CD8-positive, alpha-beta T cell (primary cell): ENCODE measurements at regions of chr1 and their contacts with region 1.

Region 1: GRCh38 chr1:21368515-21369289 is 71.2 kb upstream of the NBPF3 start:
- DNase-seq: peak; percentile 34 to 84 (median 65)
- ATAC-seq: peak; percentile 73
- H3K4me3 ChIP-seq: no peak overlapping the region
- H3K4me3 Mint-ChIP-seq: no peak overlapping the region
- H3K27ac ChIP-seq: no peak overlapping the region
- H3K27ac Mint-ChIP-seq: no peak overlapping the region
- H3K4me1 ChIP-seq: peaks cover 6% of the 10 kb centered on the region
- H3K4me1 Mint-ChIP-seq: peaks cover 10% of the 10 kb centered on the region
- H3K27me3 ChIP-seq: no peaks in the 10 kb centered on the region
- H3K27me3 Mint-ChIP-seq: no peaks in the 10 kb centered on the region
- CTCF ChIP-seq: peak; percentile 99

Region 2: GRCh38 chr1:21206117-21206516 is 162.6 kb before region 1 on chr1:
- CTCF ChIA-PET with region 1: no interaction called
- POLR2A ChIA-PET with region 1: no interaction called
- intact Hi-C with region 1: no loop called
- DNase-seq: no peak
- ATAC-seq: no peak
- H3K4me3 ChIP-seq: no peak overlapping the region
- H3K4me3 Mint-ChIP-seq: no peak overlapping the region
- H3K27ac ChIP-seq: no peak overlapping the region
- H3K27ac Mint-ChIP-seq: no peak overlapping the region
- H3K4me1 ChIP-seq: no peaks in the 10 kb centered on the region
- H3K4me1 Mint-ChIP-seq: no peaks in the 10 kb centered on the region
- H3K27me3 ChIP-seq: no peaks in the 10 kb centered on the region
- H3K27me3 Mint-ChIP-seq: no peaks in the 10 kb centered on the region
- CTCF ChIP-seq: no peak

Region 3: DNA sequence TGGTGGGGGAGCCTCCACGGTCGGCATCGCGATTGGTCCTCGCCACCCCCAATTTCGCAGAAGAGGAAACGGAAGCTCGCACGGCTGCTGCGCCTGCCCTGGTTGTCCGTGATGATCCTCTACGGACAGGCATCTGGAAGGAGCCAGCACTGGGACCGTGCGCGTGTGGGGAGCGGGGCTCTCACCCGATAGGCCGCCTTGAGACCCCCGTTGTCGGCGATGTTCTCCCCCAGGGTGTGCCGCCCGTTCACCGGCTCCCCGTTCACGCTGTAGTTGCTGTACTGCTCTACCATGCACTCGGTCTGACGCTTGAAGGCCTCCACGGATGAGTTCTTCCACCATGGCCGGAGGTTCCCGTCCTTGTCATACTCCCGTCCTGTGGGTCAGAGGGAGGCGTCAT is 143.6 kb before region 1 on chr1:
- CTCF ChIA-PET with region 1: interaction called, 17 read pairs
- POLR2A ChIA-PET with region 1: no interaction called
- intact Hi-C with region 1: no loop called
- DNase-seq: no peak
- ATAC-seq: no peak
- H3K4me3 ChIP-seq: no peak overlapping the region
- H3K4me3 Mint-ChIP-seq: no peak overlapping the region
- H3K27ac ChIP-seq: no peak overlapping the region
- H3K27ac Mint-ChIP-seq: no peak overlapping the region
- H3K4me1 ChIP-seq: no peaks in the 10 kb centered on the region
- H3K4me1 Mint-ChIP-seq: no peaks in the 10 kb centered on the region
- H3K27me3 ChIP-seq: no peaks in the 10 kb centered on the region
- H3K27me3 Mint-ChIP-seq: no peaks in the 10 kb centered on the region
- CTCF ChIP-seq: no peak

Region 4: GRCh38 chr1:21244986-21245687 is 123.6 kb before region 1 on chr1:
- CTCF ChIA-PET with region 1: interaction called, 32 read pairs
- POLR2A ChIA-PET with region 1: interaction called, 3 read pairs
- intact Hi-C with region 1: no loop called
- DNase-seq: no peak
- ATAC-seq: no peak
- H3K4me3 ChIP-seq: no peak overlapping the region
- H3K4me3 Mint-ChIP-seq: no peak overlapping the region
- H3K27ac ChIP-seq: no peak overlapping the region
- H3K27ac Mint-ChIP-seq: no peak overlapping the region
- H3K4me1 ChIP-seq: no peaks in the 10 kb centered on the region
- H3K4me1 Mint-ChIP-seq: peaks cover 2% of the 10 kb centered on the region
- H3K27me3 ChIP-seq: no peaks in the 10 kb centered on the region
- H3K27me3 Mint-ChIP-seq: no peaks in the 10 kb centered on the region
- CTCF ChIP-seq: no peak

Region 5: GRCh38 chr1:21280011-21280471 is 88.7 kb before region 1 on chr1:
- CTCF ChIA-PET with region 1: interaction called, 90 read pairs
- POLR2A ChIA-PET with region 1: no interaction called
- intact Hi-C with region 1: no loop called
- DNase-seq: peak in 4 of 9 experiments; percentile 7 to 66 (median 38)
- ATAC-seq: peak; percentile 53
- H3K4me3 ChIP-seq: peak overlapping the region; percentile 0 to 31
- H3K4me3 Mint-ChIP-seq: peak overlapping the region; percentile 69
- H3K27ac ChIP-seq: peak overlapping the region in 1 of 2 experiments; percentile 24
- H3K27ac Mint-ChIP-seq: peak overlapping the region; percentile 86
- H3K4me1 ChIP-seq: peaks cover 42% of the 10 kb centered on the region
- H3K4me1 Mint-ChIP-seq: peaks cover 44% of the 10 kb centered on the region
- H3K27me3 ChIP-seq: no peaks in the 10 kb centered on the region
- H3K27me3 Mint-ChIP-seq: no peaks in the 10 kb centered on the region
- CTCF ChIP-seq: no peak

Region 6: GRCh38 chr1:21324368-21325141 is 44.1 kb before region 1 on chr1:
- CTCF ChIA-PET with region 1: interaction called, 29 read pairs
- POLR2A ChIA-PET with region 1: no interaction called
- intact Hi-C with region 1: no loop called
- DNase-seq: peak in 8 of 9 experiments; percentile 26 to 71 (median 64)
- ATAC-seq: peak; percentile 64
- H3K4me3 ChIP-seq: peak overlapping the region in 1 of 2 experiments; percentile 4
- H3K4me3 Mint-ChIP-seq: peak overlapping the region; percentile 76
- H3K27ac ChIP-seq: peak overlapping the region; percentile 13 to 51
- H3K27ac Mint-ChIP-seq: peak overlapping the region; percentile 96
- H3K4me1 ChIP-seq: peaks cover 61% of the 10 kb centered on the region
- H3K4me1 Mint-ChIP-seq: peaks cover 74% of the 10 kb centered on the region
- H3K27me3 ChIP-seq: no peaks in the 10 kb centered on the region
- H3K27me3 Mint-ChIP-seq: no peaks in the 10 kb centered on the region
- CTCF ChIP-seq: no peak

Region 7: DNA sequence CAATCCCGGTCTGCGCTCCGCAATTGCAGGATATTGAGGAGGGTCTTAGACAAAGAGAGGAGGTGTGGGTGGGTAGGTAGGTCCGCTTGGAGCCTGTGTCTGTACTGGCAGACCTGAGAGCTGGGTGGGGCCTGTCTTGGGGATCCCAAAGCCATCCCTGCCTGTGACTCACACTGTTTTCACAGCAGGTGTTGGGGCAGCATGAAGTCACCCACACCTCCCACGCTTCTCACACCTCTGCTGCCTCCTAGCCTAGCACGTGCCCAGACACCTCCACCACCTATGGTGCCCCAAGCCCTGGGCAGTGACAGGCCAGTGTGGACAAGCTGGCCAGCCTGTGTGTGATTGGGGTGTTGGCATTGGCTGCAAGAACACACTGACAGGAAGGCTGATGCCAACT is 12.7 kb before region 1 on chr1:
- CTCF ChIA-PET with region 1: interaction called, 27 read pairs
- POLR2A ChIA-PET with region 1: no interaction called
- intact Hi-C with region 1: no loop called
- DNase-seq: no peak
- ATAC-seq: no peak
- H3K4me3 ChIP-seq: no peak overlapping the region
- H3K4me3 Mint-ChIP-seq: no peak overlapping the region
- H3K27ac ChIP-seq: no peak overlapping the region
- H3K27ac Mint-ChIP-seq: no peak overlapping the region
- H3K4me1 ChIP-seq: no peaks in the 10 kb centered on the region
- H3K4me1 Mint-ChIP-seq: peaks cover 3% of the 10 kb centered on the region
- H3K27me3 ChIP-seq: no peaks in the 10 kb centered on the region
- H3K27me3 Mint-ChIP-seq: no peaks in the 10 kb centered on the region
- CTCF ChIP-seq: no peak

Region 8: DNA sequence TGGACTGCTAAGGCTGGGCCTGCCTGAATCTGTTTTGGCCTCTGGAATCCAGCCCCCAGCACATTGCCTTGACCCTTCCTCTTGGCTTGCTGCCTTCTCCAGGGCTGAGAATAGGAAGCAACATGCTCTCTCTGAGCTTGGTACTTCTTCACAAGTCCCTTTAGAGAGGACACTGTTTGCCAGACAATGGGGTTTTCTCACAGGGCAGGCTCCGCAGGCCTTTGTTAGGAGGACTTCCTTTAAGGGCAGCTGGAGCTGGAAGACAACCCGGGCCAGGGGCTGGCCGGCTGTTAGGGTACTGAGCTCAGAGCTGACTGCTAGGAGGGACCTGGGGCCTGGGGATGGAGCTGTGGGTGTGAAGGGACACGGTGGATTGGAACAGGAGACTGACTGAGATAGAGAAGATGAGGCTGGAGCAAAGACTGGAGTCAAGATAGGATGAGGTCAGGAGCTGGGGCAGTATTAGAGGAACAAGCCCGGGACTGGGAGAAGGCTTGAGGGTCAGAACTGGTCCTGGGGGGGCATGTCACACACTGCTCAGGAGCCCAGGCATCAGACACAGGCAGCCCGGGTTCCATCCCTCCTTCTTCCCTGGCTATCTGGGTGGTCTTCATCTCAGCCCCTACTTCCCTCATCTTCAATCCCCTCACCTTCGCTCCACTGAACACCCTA is 135.1 kb after region 1 on chr1:
- CTCF ChIA-PET with region 1: no interaction called
- POLR2A ChIA-PET with region 1: no interaction called
- intact Hi-C with region 1: no loop called
- DNase-seq: no peak
- ATAC-seq: no peak
- H3K4me3 ChIP-seq: no peak overlapping the region
- H3K4me3 Mint-ChIP-seq: no peak overlapping the region
- H3K27ac ChIP-seq: no peak overlapping the region
- H3K27ac Mint-ChIP-seq: no peak overlapping the region
- H3K4me1 ChIP-seq: peaks cover 5% of the 10 kb centered on the region
- H3K4me1 Mint-ChIP-seq: peaks cover 6% of the 10 kb centered on the region
- H3K27me3 ChIP-seq: peaks cover 10 to 16% of the 10 kb centered on the region in 2 experiments
- H3K27me3 Mint-ChIP-seq: peaks cover 40% of the 10 kb centered on the region
- CTCF ChIP-seq: no peak